ENCODE measurements at regions of chr5 and their contacts with region 1.

Region 1: DNA sequence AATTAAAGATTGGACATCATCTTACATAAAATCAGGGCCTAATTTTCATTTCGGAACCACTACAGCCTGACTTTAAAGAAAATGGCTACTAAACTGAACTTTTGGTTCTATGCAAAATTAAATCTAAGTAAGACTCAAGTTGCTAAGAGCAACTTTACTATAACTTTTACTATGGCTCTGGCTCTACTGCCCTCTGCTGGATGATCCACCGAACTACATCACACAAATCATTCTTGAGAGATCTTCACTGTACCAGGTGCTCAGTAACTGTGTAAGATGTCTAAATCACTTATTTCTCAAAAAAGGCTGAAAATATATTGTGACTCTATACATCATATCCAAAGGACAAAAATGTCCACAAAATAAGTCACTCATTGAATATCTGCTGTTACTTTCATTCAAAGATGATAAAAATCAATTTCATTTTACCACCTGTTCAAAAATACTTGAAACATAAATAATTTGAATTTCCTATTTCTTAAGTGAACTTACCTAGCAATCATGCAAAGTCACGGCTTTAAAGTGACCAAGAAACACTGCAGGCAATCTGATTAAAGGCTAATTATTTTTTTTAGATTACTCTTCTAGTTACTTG is 13.5 kb downstream of the MOCS2 start:
- DNase-seq: peak; percentile 68
- H3K4me3 ChIP-seq: no peak overlapping the region
- CTCF ChIP-seq: peak; percentile 85

Region 2: GRCh38 chr5:52956915-52957747 is 138.9 kb before region 1 on chr5:
- in situ Hi-C with region 1: loop called (anchors 10 kb)
- DNase-seq: no peak
- H3K4me3 ChIP-seq: no peak overlapping the region
- CTCF ChIP-seq: no peak

Region 3: GRCh38 chr5:53191548-53192165 is 95.6 kb after region 1 on chr5:
- in situ Hi-C with region 1: no loop called
- DNase-seq: no peak
- H3K4me3 ChIP-seq: no peak overlapping the region
- CTCF ChIP-seq: no peak

Measured in astrocyte of the cerebellum (primary cell).